ENCODE measurements at regions of chr15 and their contacts with region 1.

Region 1: DNA sequence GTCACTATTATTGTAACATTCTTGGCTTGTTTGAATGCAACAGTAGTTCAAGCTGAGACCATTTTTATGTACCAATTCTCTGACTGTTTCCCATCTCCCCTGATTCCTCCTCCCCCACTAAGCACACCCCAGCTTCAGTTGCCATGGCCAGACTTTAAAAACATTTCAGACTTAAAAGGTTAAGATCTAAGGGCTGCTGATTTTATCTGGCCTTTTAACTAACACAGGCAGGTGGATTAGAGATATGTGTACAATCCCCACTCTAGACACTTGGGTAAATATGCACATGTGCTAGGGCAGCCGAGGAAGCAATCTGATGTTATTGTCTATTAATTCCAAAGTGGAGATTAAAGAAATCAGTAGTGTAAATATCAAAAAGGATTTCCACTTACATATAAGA is 386.3 kb upstream of the NR2F2 start:
- DNase-seq: peak; percentile 46 to 65
- H3K4me3 ChIP-seq: no peak overlapping the region
- H3K4me3 Mint-ChIP-seq: peak overlapping the region; percentile 9
- H3K27ac Mint-ChIP-seq: peak overlapping the region; percentile 65
- H3K4me1 ChIP-seq: peaks cover 17% of the 10 kb centered on the region
- H3K4me1 Mint-ChIP-seq: peaks cover 12% of the 10 kb centered on the region
- H3K27me3 ChIP-seq: no peaks in the 10 kb centered on the region
- H3K27me3 Mint-ChIP-seq: no peaks in the 10 kb centered on the region
- CTCF ChIP-seq: no peak

Region 2: GRCh38 chr15:95912066-95912625 is 32.1 kb before region 1 on chr15:
- CTCF ChIA-PET with region 1: no interaction called
- POLR2A ChIA-PET with region 1: no interaction called
- intact Hi-C with region 1: loop called (anchors 2 kb)
- DNase-seq: peak in 1 of 2 experiments; percentile 15
- H3K4me3 ChIP-seq: no peak overlapping the region
- H3K4me3 Mint-ChIP-seq: no peak overlapping the region
- H3K27ac Mint-ChIP-seq: no peak overlapping the region
- H3K4me1 ChIP-seq: peaks cover 10% of the 10 kb centered on the region
- H3K4me1 Mint-ChIP-seq: peaks cover 7% of the 10 kb centered on the region
- H3K27me3 ChIP-seq: no peaks in the 10 kb centered on the region
- H3K27me3 Mint-ChIP-seq: no peaks in the 10 kb centered on the region
- CTCF ChIP-seq: no peak

Region 3: GRCh38 chr15:96002890-96003859 is 58.9 kb after region 1 on chr15:
- CTCF ChIA-PET with region 1: no interaction called
- POLR2A ChIA-PET with region 1: no interaction called
- intact Hi-C with region 1: loop called (anchors 5 kb)
- DNase-seq: no peak
- H3K4me3 ChIP-seq: no peak overlapping the region
- H3K4me3 Mint-ChIP-seq: no peak overlapping the region
- H3K27ac Mint-ChIP-seq: no peak overlapping the region
- H3K4me1 ChIP-seq: peaks cover 9% of the 10 kb centered on the region
- H3K4me1 Mint-ChIP-seq: no peaks in the 10 kb centered on the region
- H3K27me3 ChIP-seq: no peaks in the 10 kb centered on the region
- H3K27me3 Mint-ChIP-seq: no peaks in the 10 kb centered on the region
- CTCF ChIP-seq: no peak

Region 4: GRCh38 chr15:96053031-96053780 is 109.0 kb after region 1 on chr15:
- CTCF ChIA-PET with region 1: no interaction called
- POLR2A ChIA-PET with region 1: no interaction called
- intact Hi-C with region 1: loop called (anchors 5 kb)
- DNase-seq: peak; percentile 9 to 42
- H3K4me3 ChIP-seq: no peak overlapping the region
- H3K4me3 Mint-ChIP-seq: peak overlapping the region; percentile 66
- H3K27ac Mint-ChIP-seq: peak overlapping the region; percentile 86
- H3K4me1 ChIP-seq: peaks cover 56% of the 10 kb centered on the region
- H3K4me1 Mint-ChIP-seq: peaks cover 20% of the 10 kb centered on the region
- H3K27me3 ChIP-seq: no peaks in the 10 kb centered on the region
- H3K27me3 Mint-ChIP-seq: no peaks in the 10 kb centered on the region
- CTCF ChIP-seq: no peak

Region 5: GRCh38 chr15:96064351-96064756 is 120.1 kb after region 1 on chr15:
- CTCF ChIA-PET with region 1: no interaction called
- POLR2A ChIA-PET with region 1: no interaction called
- intact Hi-C with region 1: loop called (anchors 2 kb)
- DNase-seq: peak; percentile 83 to 87
- H3K4me3 ChIP-seq: no peak overlapping the region
- H3K4me3 Mint-ChIP-seq: peak overlapping the region; percentile 69
- H3K27ac Mint-ChIP-seq: peak overlapping the region; percentile 40
- H3K4me1 ChIP-seq: peaks cover 38% of the 10 kb centered on the region
- H3K4me1 Mint-ChIP-seq: peaks cover 18% of the 10 kb centered on the region
- H3K27me3 ChIP-seq: no peaks in the 10 kb centered on the region
- H3K27me3 Mint-ChIP-seq: no peaks in the 10 kb centered on the region
- CTCF ChIP-seq: no peak

Measured in Caco-2 (cell line).